CD8-positive, alpha-beta memory T cell (primary cell): ENCODE measurements at regions of chr9 and their contacts with region 1.

Region 1: DNA sequence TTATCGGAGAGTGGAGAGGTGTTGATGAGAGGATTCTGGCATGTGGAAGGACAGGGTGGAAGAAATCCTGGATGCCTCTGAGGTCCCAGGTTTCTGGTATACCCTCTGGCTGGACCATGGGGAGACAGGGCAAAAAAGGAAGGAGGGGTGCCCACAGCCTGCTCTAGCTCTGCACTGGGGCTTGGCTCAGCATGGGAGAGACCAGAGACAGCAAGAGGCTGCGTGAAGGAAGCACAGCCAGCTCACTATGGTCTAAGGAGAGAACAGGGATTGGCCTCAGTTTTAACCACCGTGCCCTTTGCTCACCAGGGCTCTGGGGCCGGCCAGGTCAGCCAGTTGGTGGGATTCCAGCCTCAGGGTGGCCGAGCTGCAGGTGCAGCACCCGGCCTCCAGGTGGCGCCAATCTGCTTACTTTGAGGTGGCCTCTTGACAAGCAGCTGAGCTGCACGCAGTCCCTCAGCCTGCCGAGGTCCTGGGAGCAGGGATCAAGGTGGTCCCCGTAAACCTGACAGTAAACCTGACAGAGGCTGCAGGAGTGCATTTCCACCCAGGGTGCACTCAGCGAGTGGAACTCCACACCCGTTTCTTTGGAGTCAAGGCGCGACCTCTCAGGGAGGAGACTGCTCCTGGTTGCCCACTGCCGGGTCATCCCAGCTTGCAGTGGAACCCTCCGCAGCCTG is 25.0 kb upstream of the SPTLC1 start:
- DNase-seq: peak; percentile 57 to 82 (median 63)
- H3K4me3 ChIP-seq: no peak overlapping the region
- H3K4me3 Mint-ChIP-seq: peak overlapping the region in 5 of 7 donors; percentile 57 to 83 (median 75)
- H3K27ac ChIP-seq: no peak overlapping the region
- H3K27ac Mint-ChIP-seq: no peak overlapping the region
- H3K4me1 ChIP-seq: peaks cover 9% of the 10 kb centered on the region
- H3K4me1 Mint-ChIP-seq: peaks cover 8 to 18% (median 10%) of the 10 kb centered on the region in 3 donors
- H3K27me3 ChIP-seq: peaks cover 12% of the 10 kb centered on the region
- H3K27me3 Mint-ChIP-seq: peaks cover 19 to 50% of the 10 kb centered on the region in 2 donors

Region 2: DNA sequence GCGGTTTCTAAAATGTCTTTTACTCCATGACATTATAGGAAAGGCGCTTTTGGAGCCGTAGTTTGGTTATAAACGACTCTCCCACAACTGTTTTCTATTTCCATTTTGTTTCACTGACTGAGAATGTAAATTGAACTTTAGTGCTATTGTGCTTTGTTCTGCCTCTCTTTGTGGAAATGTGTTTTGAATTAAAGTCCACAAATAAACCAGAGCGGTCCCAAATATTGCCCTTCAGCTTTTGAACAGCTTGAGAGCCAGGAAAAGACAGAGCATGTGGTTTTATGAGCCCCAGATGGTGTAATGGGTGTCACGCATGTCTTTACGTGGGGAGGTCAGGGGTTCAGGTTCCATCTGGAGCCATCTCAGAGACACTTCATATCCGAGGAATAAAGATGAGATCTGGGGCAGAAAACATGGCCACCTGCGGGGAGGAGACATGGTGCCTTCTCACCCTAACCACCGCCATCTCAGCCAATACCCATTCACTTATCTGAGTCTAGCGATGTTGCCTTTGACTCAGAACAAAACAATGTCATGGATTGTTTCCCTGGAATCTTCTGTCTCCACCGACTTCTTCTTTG is 147.7 kb before region 1 on chr9:
- CTCF ChIA-PET with region 1: no interaction called
- POLR2A ChIA-PET with region 1: no interaction called
- DNase-seq: no peak
- H3K4me3 ChIP-seq: no peak overlapping the region
- H3K4me3 Mint-ChIP-seq: no peak overlapping the region
- H3K27ac ChIP-seq: no peak overlapping the region
- H3K27ac Mint-ChIP-seq: no peak overlapping the region
- H3K4me1 ChIP-seq: no peaks in the 10 kb centered on the region
- H3K4me1 Mint-ChIP-seq: no peaks in the 10 kb centered on the region
- H3K27me3 ChIP-seq: peaks cover 3% of the 10 kb centered on the region
- H3K27me3 Mint-ChIP-seq: peaks cover 7 to 26% of the 10 kb centered on the region in 2 donors

Region 3: DNA sequence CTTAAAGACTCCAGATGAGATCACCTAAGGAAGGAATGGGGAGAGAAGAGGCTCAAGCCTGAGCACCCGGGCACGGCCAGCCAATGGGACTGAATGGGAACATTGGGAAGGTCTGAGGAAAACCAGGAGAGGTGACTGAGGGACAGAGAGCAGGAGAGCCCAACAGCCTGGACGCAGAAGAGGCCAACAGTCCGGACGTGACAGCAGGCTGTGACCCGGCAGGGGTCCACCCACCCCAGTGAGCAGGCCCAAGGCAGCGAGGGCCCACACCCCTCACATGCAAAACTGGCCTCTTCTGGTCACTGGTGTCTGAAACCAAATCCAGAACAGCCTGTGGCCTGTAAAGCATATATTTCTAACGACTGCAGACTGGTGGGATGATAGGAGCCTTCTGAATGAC is 17.4 kb before region 1 on chr9:
- CTCF ChIA-PET with region 1: interaction called, 11 read pairs
- POLR2A ChIA-PET with region 1: no interaction called
- DNase-seq: no peak
- H3K4me3 ChIP-seq: no peak overlapping the region
- H3K4me3 Mint-ChIP-seq: no peak overlapping the region
- H3K27ac ChIP-seq: no peak overlapping the region
- H3K27ac Mint-ChIP-seq: no peak overlapping the region
- H3K4me1 ChIP-seq: no peaks in the 10 kb centered on the region
- H3K4me1 Mint-ChIP-seq: no peaks in the 10 kb centered on the region
- H3K27me3 ChIP-seq: no peaks in the 10 kb centered on the region
- H3K27me3 Mint-ChIP-seq: peaks cover 2 to 9% of the 10 kb centered on the region in 2 donors

Region 4: DNA sequence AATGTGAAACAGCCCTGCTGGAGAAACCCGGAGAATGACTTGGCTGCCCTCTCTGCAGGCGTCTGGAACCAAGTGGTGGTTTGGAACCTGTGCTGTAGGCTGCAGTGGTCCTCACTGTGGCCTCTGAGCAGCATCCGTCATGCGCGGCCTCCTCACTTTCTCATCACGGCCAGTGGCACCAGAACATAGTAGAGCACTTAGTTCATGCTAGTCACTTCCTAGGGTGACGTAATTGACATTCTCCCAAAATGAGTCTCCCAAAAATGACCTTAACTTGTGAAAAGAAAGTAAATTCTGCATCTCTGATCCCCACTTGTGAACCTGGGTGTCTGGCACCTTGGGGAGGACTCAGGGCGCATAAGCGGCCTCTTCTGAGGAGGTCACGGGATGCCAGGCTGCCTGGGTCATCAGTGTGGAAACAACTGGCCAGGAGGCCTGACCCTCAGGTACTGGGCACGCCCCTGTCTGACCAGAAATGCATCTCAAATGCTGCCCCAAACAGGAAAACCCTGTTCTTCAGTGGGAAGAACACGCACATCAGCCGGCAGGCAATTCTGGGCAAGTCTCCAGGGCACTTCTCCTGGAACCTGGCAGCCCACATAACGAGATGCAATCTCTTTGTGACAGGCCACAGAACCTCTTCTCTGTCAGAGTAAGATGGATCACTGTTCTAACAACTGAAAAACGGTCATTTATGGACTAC is 11.6 kb after region 1 on chr9:
- CTCF ChIA-PET with region 1: interaction called, 29 read pairs
- POLR2A ChIA-PET with region 1: no interaction called
- DNase-seq: no peak
- H3K4me3 ChIP-seq: no peak overlapping the region
- H3K4me3 Mint-ChIP-seq: no peak overlapping the region
- H3K27ac ChIP-seq: no peak overlapping the region
- H3K27ac Mint-ChIP-seq: no peak overlapping the region
- H3K4me1 ChIP-seq: no peaks in the 10 kb centered on the region
- H3K4me1 Mint-ChIP-seq: no peaks in the 10 kb centered on the region
- H3K27me3 ChIP-seq: no peaks in the 10 kb centered on the region
- H3K27me3 Mint-ChIP-seq: peaks cover 7 to 26% of the 10 kb centered on the region in 2 donors

Region 5: DNA sequence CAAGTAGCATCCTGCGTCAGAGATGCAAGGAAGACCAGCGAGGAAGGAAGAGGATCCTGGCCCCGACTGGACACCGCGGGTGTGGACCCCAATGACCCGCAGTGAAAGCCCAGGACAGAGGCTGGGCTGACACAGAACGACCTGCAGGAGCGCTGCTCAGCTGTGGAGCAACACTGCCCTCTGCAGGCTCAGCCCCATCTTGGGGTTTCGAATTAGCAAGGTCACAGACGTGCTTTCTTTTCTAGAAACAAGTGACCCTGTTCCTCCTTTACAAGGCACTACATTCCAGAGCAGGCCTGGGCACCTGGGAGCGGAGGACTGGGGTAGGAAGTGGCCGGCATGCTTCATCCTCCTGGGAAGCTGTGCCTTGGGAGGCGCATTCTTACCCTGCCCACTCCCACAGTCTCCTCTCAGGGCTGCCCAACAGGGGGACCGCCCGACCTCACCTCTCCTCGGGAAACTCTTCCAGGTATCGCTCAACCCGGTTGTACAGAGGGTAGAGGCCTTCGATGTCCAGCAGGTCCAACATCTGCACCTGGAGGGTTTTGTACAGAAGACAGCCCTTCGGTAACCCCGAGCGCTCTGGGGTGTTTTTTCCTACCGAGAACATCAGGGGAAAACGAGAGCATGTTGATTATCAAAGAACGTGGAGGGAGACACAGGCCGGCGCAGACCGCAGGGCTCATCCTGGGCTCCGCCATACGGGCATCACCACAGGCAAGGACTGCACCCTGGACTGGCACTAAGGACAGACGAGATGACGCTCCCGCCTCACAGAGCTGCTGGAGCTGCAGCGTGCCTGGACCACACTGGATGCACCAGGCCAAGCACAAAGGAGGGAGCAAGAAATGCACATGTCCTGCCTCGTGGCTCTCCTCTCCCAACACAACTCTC is 494.7 kb after region 1 on chr9:
- CTCF ChIA-PET with region 1: interaction called, 19 read pairs
- POLR2A ChIA-PET with region 1: no interaction called
- DNase-seq: peak; percentile 34 to 66 (median 39)
- H3K4me3 ChIP-seq: no peak overlapping the region
- H3K4me3 Mint-ChIP-seq: no peak overlapping the region
- H3K27ac ChIP-seq: no peak overlapping the region
- H3K27ac Mint-ChIP-seq: peak overlapping the region in 2 of 8 donors; percentile 14 to 32
- H3K4me1 ChIP-seq: no peaks in the 10 kb centered on the region
- H3K4me1 Mint-ChIP-seq: no peaks in the 10 kb centered on the region
- H3K27me3 ChIP-seq: no peaks in the 10 kb centered on the region
- H3K27me3 Mint-ChIP-seq: peaks cover 0 to 2% of the 10 kb centered on the region in 2 donors

Region 6: DNA sequence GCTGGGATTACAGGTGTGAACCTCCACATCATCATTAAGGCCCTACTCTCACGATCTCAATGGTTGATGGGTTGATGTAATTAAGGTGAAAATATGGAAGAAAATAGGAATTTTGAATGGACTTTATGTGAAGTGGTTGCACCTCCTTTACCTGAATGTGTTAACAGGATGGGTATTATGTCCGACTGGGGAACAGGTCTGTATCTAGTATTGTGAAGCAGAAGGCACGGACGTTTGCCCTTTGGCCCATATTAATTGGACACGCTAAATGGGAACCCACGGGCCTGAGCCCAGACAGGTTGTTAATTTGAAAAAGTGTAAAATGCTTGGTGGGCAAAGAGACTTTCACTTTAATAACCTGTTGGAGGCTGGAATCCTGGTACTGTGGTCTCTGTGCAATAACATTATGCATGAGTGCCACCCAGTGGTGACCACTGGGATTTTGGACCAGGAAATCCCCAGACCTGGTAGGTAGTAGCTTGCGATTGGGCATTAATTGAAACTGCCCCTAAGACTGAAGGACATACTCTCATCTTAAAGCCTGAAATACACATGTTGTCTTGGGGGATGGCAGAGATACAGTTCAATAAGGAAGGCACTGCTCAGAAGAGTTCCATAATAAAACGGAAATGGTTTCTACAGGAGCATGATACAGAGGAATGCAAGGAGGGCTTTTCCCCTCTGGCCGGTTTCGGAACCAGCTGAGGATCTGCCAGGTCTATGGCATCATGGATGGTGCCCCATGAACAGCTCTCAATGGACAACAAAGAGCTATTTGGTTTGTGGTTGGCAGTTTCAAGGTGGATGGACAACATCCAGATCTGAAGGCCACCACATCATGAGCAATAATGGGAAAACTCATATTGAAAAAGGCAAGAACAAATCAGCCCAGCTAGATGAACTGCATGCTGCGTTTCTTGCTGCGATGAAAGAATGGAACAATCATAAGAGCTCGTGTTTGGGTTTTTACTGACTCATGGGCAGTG is 650.6 kb after region 1 on chr9:
- CTCF ChIA-PET with region 1: interaction called, 51 read pairs
- POLR2A ChIA-PET with region 1: no interaction called
- DNase-seq: peak; percentile 55 to 83 (median 65)
- H3K4me3 ChIP-seq: no peak overlapping the region
- H3K4me3 Mint-ChIP-seq: peak overlapping the region in 1 of 7 donors; percentile 45
- H3K27ac ChIP-seq: no peak overlapping the region
- H3K27ac Mint-ChIP-seq: peak overlapping the region in 4 of 8 donors; percentile 36 to 96 (median 61)
- H3K4me1 ChIP-seq: peaks cover 5% of the 10 kb centered on the region
- H3K4me1 Mint-ChIP-seq: peaks cover 2 to 6% (median 6%) of the 10 kb centered on the region in 3 donors
- H3K27me3 ChIP-seq: no peaks in the 10 kb centered on the region
- H3K27me3 Mint-ChIP-seq: peaks cover 2 to 26% of the 10 kb centered on the region in 2 donors